PC-3 (cell line): ENCODE measurements at regions of chr6 and their contacts with region 1.

Region 1: GRCh38 chr6:29016559-29017427 is 11.7 kb upstream of the ZNF311 start:
- DNase-seq: peak; percentile 91
- ATAC-seq: peak; percentile 90
- H3K4me3 ChIP-seq: peak overlapping the region; percentile 94
- H3K27ac ChIP-seq: no peak overlapping the region
- H3K4me1 ChIP-seq: no peaks in the 10 kb centered on the region
- H3K27me3 ChIP-seq: no peaks in the 10 kb centered on the region
- CTCF ChIP-seq: peak; percentile 96

Region 2: GRCh38 chr6:28863604-28864320 is 153.0 kb before region 1 on chr6:
- CTCF ChIA-PET with region 1: interaction called, 3 read pairs
- POLR2A ChIA-PET with region 1: no interaction called
- intact Hi-C with region 1: loop called (anchors 10 kb)
- DNase-seq: peak; percentile 91
- ATAC-seq: peak; percentile 61
- H3K4me3 ChIP-seq: peak overlapping the region; percentile 87
- H3K27ac ChIP-seq: peak overlapping the region; percentile 22; the same call in 1 of the 2 replicates
- H3K4me1 ChIP-seq: peaks cover 29% of the 10 kb centered on the region
- H3K27me3 ChIP-seq: no peaks in the 10 kb centered on the region
- CTCF ChIP-seq: no peak

Region 3: GRCh38 chr6:28895134-28895812 is 121.5 kb before region 1 on chr6:
- CTCF ChIA-PET with region 1: interaction called, 3 read pairs
- POLR2A ChIA-PET with region 1: no interaction called
- intact Hi-C with region 1: loop called (anchors 2 kb)
- DNase-seq: peak; percentile 98
- ATAC-seq: peak; percentile 62
- H3K4me3 ChIP-seq: peak overlapping the region; percentile 83
- H3K27ac ChIP-seq: peak overlapping the region; percentile 80
- H3K4me1 ChIP-seq: peaks cover 10% of the 10 kb centered on the region
- H3K27me3 ChIP-seq: no peaks in the 10 kb centered on the region
- CTCF ChIP-seq: no peak

Region 4: GRCh38 chr6:28923318-28924102 is 93.3 kb before region 1 on chr6 and contains the start of gene TRIM27:
- CTCF ChIA-PET with region 1: interaction called, 6 read pairs
- POLR2A ChIA-PET with region 1: interaction called, 6 read pairs
- intact Hi-C with region 1: loop called (anchors 1 kb)
- DNase-seq: peak; percentile 95
- ATAC-seq: peak; percentile 72
- H3K4me3 ChIP-seq: peak within 1 kb of the TSS; percentile 86
- H3K27ac ChIP-seq: peak within 1 kb of the TSS; percentile 82
- H3K4me1 ChIP-seq: peaks cover 23% of the 10 kb centered on the region
- H3K27me3 ChIP-seq: no peaks in the 10 kb centered on the region
- CTCF ChIP-seq: no peak
- total RNA-seq, gene TRIM27: 85.8 and 92.5 TPM in 2 replicates

Region 5: DNA sequence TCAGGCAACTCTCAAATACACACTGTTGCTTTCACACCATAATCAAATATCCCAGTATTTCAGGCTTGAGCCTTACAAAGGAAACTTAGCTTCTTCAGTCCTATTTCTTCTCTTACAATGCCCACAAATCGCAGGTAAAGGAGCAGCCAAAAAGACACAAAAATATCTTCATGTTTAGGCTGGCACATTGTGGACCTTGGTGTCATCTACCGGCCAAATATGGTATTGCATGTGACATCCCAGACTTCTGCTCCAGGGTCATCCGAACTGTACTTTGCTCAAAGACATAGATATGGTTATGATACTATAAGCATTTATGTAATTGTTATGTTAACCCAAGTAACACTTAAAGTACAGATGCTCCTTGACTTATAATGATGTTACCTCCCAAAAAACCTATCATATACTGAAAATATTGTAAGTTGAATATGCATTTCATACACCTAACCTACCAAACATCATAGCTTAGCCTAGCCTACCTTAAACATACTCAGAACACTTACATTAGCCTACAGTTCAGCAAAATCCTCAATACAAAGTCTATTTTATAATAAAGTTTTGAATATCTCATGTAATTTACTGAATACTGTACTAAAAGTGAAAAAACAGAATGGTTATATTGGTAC is 572.7 kb after region 1 on chr6:
- CTCF ChIA-PET with region 1: no interaction called
- POLR2A ChIA-PET with region 1: no interaction called
- intact Hi-C with region 1: loop called (anchors 5 kb)
- DNase-seq: peak; percentile 71
- ATAC-seq: peak; percentile 68
- H3K4me3 ChIP-seq: no peak overlapping the region
- H3K27ac ChIP-seq: no peak overlapping the region
- H3K4me1 ChIP-seq: no peaks in the 10 kb centered on the region
- H3K27me3 ChIP-seq: peaks cover 23% of the 10 kb centered on the region
- CTCF ChIP-seq: peak; percentile 97